ENCODE measurements at regions of chr1 and their contacts with region 1.

Region 1: GRCh38 chr1:198937231-198938031 is 298.6 kb downstream of the PTPRC start:
- DNase-seq: peak in 10 of 14 experiments; percentile 9 to 87 (median 25)
- ATAC-seq: peak; percentile 83
- H3K4me3 ChIP-seq: peak overlapping the region; percentile 69
- H3K4me3 Mint-ChIP-seq: peak overlapping the region; percentile 90
- H3K27ac ChIP-seq: peak overlapping the region; percentile 39 to 58
- H3K27ac Mint-ChIP-seq: no peak overlapping the region
- H3K4me1 ChIP-seq: peaks cover 8% of the 10 kb centered on the region
- H3K4me1 Mint-ChIP-seq: peaks cover 26% of the 10 kb centered on the region
- H3K27me3 ChIP-seq: no peaks in the 10 kb centered on the region
- H3K27me3 Mint-ChIP-seq: no peaks in the 10 kb centered on the region
- CTCF ChIP-seq: no peak

Region 2: GRCh38 chr1:198167436-198167934 is 769.9 kb before region 1 on chr1:
- CTCF ChIA-PET with region 1: no interaction called
- POLR2A ChIA-PET with region 1: no interaction called
- intact Hi-C with region 1: loop called in 1 of 2 experiments (anchors 10 kb)
- DNase-seq: peak in 5 of 14 experiments; percentile 16 to 85 (median 63)
- ATAC-seq: peak; percentile 48
- H3K4me3 ChIP-seq: peak overlapping the region; percentile 24
- H3K4me3 Mint-ChIP-seq: peak overlapping the region; percentile 74
- H3K27ac ChIP-seq: peak overlapping the region; percentile 57 to 79
- H3K27ac Mint-ChIP-seq: peak overlapping the region; percentile 88
- H3K4me1 ChIP-seq: peaks cover 64% of the 10 kb centered on the region
- H3K4me1 Mint-ChIP-seq: peaks cover 91% of the 10 kb centered on the region
- H3K27me3 ChIP-seq: no peaks in the 10 kb centered on the region
- H3K27me3 Mint-ChIP-seq: no peaks in the 10 kb centered on the region
- CTCF ChIP-seq: no peak

Region 3: DNA sequence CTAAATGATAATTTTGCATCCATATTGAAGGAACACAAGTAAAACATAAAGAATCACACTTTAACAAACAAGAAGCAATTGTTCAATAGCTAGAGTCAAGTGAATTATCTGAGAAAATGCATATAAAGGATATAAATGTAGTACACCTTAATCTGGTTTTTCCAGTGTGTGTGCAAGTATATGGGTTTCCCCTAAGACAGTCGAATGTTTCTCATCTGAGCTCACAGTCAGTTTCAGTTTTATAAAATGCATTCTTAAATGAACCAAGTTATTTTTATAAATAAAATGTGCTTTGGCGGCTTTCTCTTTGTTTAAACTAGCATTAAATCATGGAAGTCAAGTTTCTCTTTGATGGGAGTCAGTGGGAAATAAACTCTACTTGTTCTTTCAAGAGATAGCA is 172.7 kb before region 1 on chr1:
- CTCF ChIA-PET with region 1: no interaction called
- POLR2A ChIA-PET with region 1: interaction called, 4 read pairs
- intact Hi-C with region 1: loop called in 1 of 2 experiments (anchors 5 kb)
- DNase-seq: no peak
- ATAC-seq: no peak
- H3K4me3 ChIP-seq: no peak overlapping the region
- H3K4me3 Mint-ChIP-seq: no peak overlapping the region
- H3K27ac ChIP-seq: no peak overlapping the region
- H3K27ac Mint-ChIP-seq: no peak overlapping the region
- H3K4me1 ChIP-seq: no peaks in the 10 kb centered on the region
- H3K4me1 Mint-ChIP-seq: peaks cover 46% of the 10 kb centered on the region
- H3K27me3 ChIP-seq: no peaks in the 10 kb centered on the region
- H3K27me3 Mint-ChIP-seq: no peaks in the 10 kb centered on the region
- CTCF ChIP-seq: no peak

Region 4: GRCh38 chr1:198922638-198923430 is 14.6 kb before region 1 on chr1:
- CTCF ChIA-PET with region 1: no interaction called
- POLR2A ChIA-PET with region 1: interaction called, 53 read pairs
- intact Hi-C with region 1: loop called in 1 of 2 experiments (anchors 1 kb)
- DNase-seq: peak in 3 of 14 experiments; percentile 35 to 60 (median 49)
- ATAC-seq: no peak
- H3K4me3 ChIP-seq: no peak overlapping the region
- H3K4me3 Mint-ChIP-seq: peak overlapping the region; percentile 31
- H3K27ac ChIP-seq: peak overlapping the region in 1 of 2 donors; percentile 26
- H3K27ac Mint-ChIP-seq: peak overlapping the region; percentile 28
- H3K4me1 ChIP-seq: peaks cover 10% of the 10 kb centered on the region
- H3K4me1 Mint-ChIP-seq: peaks cover 84% of the 10 kb centered on the region
- H3K27me3 ChIP-seq: no peaks in the 10 kb centered on the region
- H3K27me3 Mint-ChIP-seq: no peaks in the 10 kb centered on the region
- CTCF ChIP-seq: no peak

Region 5: DNA sequence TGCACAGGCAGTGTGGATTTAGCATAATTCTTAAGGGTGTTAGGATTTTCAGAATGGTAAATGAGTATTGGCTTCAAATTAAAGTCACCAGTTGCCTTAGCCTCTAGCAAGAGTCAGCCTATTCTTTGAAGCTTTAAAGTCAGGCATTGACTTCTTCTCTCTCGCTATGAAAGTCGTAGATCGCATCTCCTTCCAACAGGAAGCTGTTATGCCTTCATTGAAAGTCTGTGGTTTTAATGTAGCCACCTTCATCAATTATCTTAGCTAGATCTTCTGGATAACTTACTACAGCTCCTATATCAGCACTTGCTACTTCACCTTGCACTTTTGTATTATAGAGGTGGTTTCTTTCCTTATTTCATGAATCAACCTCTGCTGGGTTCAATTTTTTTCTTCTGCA is 21.6 kb after region 1 on chr1:
- CTCF ChIA-PET with region 1: no interaction called
- POLR2A ChIA-PET with region 1: interaction called, 11 read pairs
- intact Hi-C with region 1: loop called in 1 of 2 experiments (anchors 2 kb)
- DNase-seq: peak in 3 of 14 experiments; percentile 23 to 38 (median 26)
- ATAC-seq: peak; percentile 76
- H3K4me3 ChIP-seq: no peak overlapping the region
- H3K4me3 Mint-ChIP-seq: no peak overlapping the region
- H3K27ac ChIP-seq: no peak overlapping the region
- H3K27ac Mint-ChIP-seq: peak overlapping the region; percentile 2
- H3K4me1 ChIP-seq: no peaks in the 10 kb centered on the region
- H3K4me1 Mint-ChIP-seq: peaks cover 38% of the 10 kb centered on the region
- H3K27me3 ChIP-seq: no peaks in the 10 kb centered on the region
- H3K27me3 Mint-ChIP-seq: no peaks in the 10 kb centered on the region
- CTCF ChIP-seq: no peak

Region 6: GRCh38 chr1:198967566-198967965 is 30.1 kb after region 1 on chr1:
- CTCF ChIA-PET with region 1: no interaction called
- POLR2A ChIA-PET with region 1: interaction called, 11 read pairs
- intact Hi-C with region 1: no loop called
- DNase-seq: no peak
- ATAC-seq: no peak
- H3K4me3 ChIP-seq: no peak overlapping the region
- H3K4me3 Mint-ChIP-seq: no peak overlapping the region
- H3K27ac ChIP-seq: no peak overlapping the region
- H3K27ac Mint-ChIP-seq: no peak overlapping the region
- H3K4me1 ChIP-seq: no peaks in the 10 kb centered on the region
- H3K4me1 Mint-ChIP-seq: peaks cover 42% of the 10 kb centered on the region
- H3K27me3 ChIP-seq: no peaks in the 10 kb centered on the region
- H3K27me3 Mint-ChIP-seq: no peaks in the 10 kb centered on the region
- CTCF ChIP-seq: no peak